ENCODE measurements at regions of chr3 and their contacts with region 1.

Region 1: DNA sequence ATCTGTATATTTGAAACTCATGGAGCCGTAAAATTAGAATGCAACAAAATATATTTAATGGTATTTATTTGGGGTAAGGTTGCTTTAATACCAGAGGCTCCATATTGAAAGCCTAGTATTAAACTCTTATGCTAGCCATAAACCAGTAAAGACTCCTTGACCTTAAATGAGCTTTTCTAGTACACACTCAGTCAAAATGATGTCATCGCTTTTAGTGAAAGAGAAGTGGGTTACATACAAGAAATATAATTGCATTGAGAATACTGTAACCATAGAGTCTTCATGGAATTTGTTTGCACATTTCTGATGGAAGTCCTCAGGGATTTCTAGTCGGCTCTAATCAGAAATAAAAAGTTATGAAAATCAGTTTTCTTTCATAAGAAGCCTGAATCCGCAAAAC is 757.6 kb downstream of the GBE1 start:
- DNase-seq: no peak
- ATAC-seq: no peak
- H3K4me3 ChIP-seq: no peak overlapping the region
- H3K27ac ChIP-seq: no peak overlapping the region
- H3K4me1 ChIP-seq: no peaks in the 10 kb centered on the region
- H3K27me3 ChIP-seq: no peaks in the 10 kb centered on the region
- CTCF ChIP-seq: no peak

Region 2: DNA sequence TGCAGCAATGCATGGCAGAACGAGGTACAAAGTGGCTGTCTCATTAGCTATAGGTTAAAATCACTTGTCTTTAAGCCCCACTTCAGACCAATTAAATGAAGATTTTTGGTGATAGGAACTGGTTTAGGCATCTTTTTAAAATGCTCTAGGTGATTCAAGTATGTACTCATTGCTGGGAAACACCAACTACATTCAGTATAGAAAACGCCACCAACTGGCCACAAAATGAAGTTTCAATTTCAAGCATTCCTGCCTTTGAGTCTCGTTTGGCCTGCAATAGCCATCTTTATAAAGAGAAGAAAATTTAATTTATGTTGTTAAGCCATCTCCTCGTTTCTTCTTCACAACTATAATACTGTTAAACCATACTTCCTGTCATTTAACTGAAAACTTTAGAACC is 169.7 kb after region 1 on chr3:
- CTCF ChIA-PET with region 1: no interaction called
- POLR2A ChIA-PET with region 1: no interaction called
- intact Hi-C with region 1: loop called (anchors 5 kb)
- DNase-seq: peak; percentile 66
- ATAC-seq: peak; percentile 76
- H3K4me3 ChIP-seq: no peak overlapping the region
- H3K27ac ChIP-seq: no peak overlapping the region
- H3K4me1 ChIP-seq: no peaks in the 10 kb centered on the region
- H3K27me3 ChIP-seq: no peaks in the 10 kb centered on the region
- CTCF ChIP-seq: peak; percentile 78

Region 3: DNA sequence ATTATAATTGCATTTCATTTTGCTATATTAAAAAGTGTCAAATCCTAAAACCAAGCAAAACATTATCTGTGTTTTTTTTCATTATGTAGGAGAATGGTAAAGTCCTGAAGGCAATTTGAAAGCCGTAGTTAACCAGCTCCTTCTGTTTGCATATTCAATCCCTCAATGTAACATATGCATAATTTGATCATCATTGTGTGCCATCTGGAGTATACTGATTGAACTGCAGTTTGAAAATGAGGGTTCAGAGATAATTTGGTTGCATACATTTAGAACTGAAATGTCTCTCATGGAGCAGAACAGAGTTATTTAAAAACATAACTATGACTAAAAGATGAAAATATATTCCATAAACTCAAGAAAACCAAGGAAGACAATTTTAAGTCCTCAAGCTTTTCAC is 239.1 kb after region 1 on chr3:
- CTCF ChIA-PET with region 1: no interaction called
- POLR2A ChIA-PET with region 1: no interaction called
- intact Hi-C with region 1: no loop called
- DNase-seq: peak; percentile 70
- ATAC-seq: peak; percentile 65
- H3K4me3 ChIP-seq: no peak overlapping the region
- H3K27ac ChIP-seq: no peak overlapping the region
- H3K4me1 ChIP-seq: no peaks in the 10 kb centered on the region
- H3K27me3 ChIP-seq: no peaks in the 10 kb centered on the region
- CTCF ChIP-seq: peak; percentile 82